ENCODE measurements at regions of chr9 and their contacts with region 1.

Region 1: GRCh38 chr9:131046581-131047202 is 37.7 kb downstream of the LAMC3 start:
- DNase-seq: peak; percentile 54 to 82 (median 69)
- ATAC-seq: peak; percentile 90
- H3K4me3 ChIP-seq: no peak overlapping the region
- H3K4me3 Mint-ChIP-seq: peak overlapping the region in 8 of 10 donors; percentile 31 to 70 (median 55)
- H3K27ac ChIP-seq: no peak overlapping the region
- H3K27ac Mint-ChIP-seq: peak overlapping the region in 3 of 9 donors; percentile 30 to 65 (median 38)
- H3K4me1 ChIP-seq: peaks cover 0 to 6% of the 10 kb centered on the region in 2 donors
- H3K4me1 Mint-ChIP-seq: peaks cover 0 to 18% (median 10%) of the 10 kb centered on the region in 7 donors
- H3K27me3 ChIP-seq: no peaks in the 10 kb centered on the region
- H3K27me3 Mint-ChIP-seq: peaks cover 0 to 2% (median 0%) of the 10 kb centered on the region in 5 donors

Region 2: DNA sequence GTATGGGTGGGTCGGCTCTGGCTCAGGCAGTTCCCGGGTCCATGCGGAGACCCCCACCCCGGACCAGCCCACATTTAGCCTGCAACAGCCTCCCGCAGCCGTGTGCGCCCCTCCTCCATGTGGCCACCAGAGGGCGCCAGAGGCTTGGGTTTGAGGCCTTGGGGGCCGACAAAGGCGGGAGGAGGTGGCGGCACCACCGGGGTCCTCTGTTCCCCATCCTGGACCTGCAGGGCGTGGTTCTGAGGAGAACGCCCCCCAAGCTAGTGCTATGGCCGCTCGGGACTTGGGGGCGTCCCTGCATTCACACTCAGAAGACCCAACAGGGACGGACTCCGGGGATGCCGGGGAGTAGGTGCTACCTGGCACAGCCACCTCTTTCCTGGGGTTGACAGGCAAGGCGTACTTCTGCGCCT is 585.5 kb before region 1 on chr9:
- CTCF ChIA-PET with region 1: interaction called, 4 read pairs
- POLR2A ChIA-PET with region 1: no interaction called
- intact Hi-C with region 1: loop called in 1 of 2 experiments (anchors 1 kb)
- DNase-seq: peak; percentile 25 to 79 (median 62)
- ATAC-seq: peak; percentile 75
- H3K4me3 ChIP-seq: no peak overlapping the region
- H3K4me3 Mint-ChIP-seq: no peak overlapping the region
- H3K27ac ChIP-seq: no peak overlapping the region
- H3K27ac Mint-ChIP-seq: no peak overlapping the region
- H3K4me1 ChIP-seq: no peaks in the 10 kb centered on the region
- H3K4me1 Mint-ChIP-seq: peaks cover 0 to 1% (median 0%) of the 10 kb centered on the region in 7 donors
- H3K27me3 ChIP-seq: peaks cover 0 to 4% of the 10 kb centered on the region in 2 donors
- H3K27me3 Mint-ChIP-seq: peaks cover 7 to 33% (median 14%) of the 10 kb centered on the region in 5 donors

Region 3: GRCh38 chr9:130590305-130590704 is 456.4 kb before region 1 on chr9:
- CTCF ChIA-PET with region 1: no interaction called
- POLR2A ChIA-PET with region 1: no interaction called
- intact Hi-C with region 1: no loop called
- DNase-seq: no peak
- ATAC-seq: no peak
- H3K4me3 ChIP-seq: no peak overlapping the region
- H3K4me3 Mint-ChIP-seq: no peak overlapping the region
- H3K27ac ChIP-seq: no peak overlapping the region
- H3K27ac Mint-ChIP-seq: no peak overlapping the region
- H3K4me1 ChIP-seq: no peaks in the 10 kb centered on the region
- H3K4me1 Mint-ChIP-seq: peaks cover 5 to 53% (median 40%) of the 10 kb centered on the region in 7 donors
- H3K27me3 ChIP-seq: no peaks in the 10 kb centered on the region
- H3K27me3 Mint-ChIP-seq: no peaks in the 10 kb centered on the region

Region 4: GRCh38 chr9:130607640-130608420 is 438.9 kb before region 1 on chr9:
- CTCF ChIA-PET with region 1: no interaction called
- POLR2A ChIA-PET with region 1: no interaction called
- intact Hi-C with region 1: no loop called
- DNase-seq: no peak
- ATAC-seq: no peak
- H3K4me3 ChIP-seq: no peak overlapping the region
- H3K4me3 Mint-ChIP-seq: no peak overlapping the region
- H3K27ac ChIP-seq: no peak overlapping the region
- H3K27ac Mint-ChIP-seq: peak overlapping the region in 1 of 9 donors; percentile 43
- H3K4me1 ChIP-seq: no peaks in the 10 kb centered on the region
- H3K4me1 Mint-ChIP-seq: peaks cover 0 to 7% (median 4%) of the 10 kb centered on the region in 7 donors
- H3K27me3 ChIP-seq: no peaks in the 10 kb centered on the region
- H3K27me3 Mint-ChIP-seq: no peaks in the 10 kb centered on the region

Region 5: DNA sequence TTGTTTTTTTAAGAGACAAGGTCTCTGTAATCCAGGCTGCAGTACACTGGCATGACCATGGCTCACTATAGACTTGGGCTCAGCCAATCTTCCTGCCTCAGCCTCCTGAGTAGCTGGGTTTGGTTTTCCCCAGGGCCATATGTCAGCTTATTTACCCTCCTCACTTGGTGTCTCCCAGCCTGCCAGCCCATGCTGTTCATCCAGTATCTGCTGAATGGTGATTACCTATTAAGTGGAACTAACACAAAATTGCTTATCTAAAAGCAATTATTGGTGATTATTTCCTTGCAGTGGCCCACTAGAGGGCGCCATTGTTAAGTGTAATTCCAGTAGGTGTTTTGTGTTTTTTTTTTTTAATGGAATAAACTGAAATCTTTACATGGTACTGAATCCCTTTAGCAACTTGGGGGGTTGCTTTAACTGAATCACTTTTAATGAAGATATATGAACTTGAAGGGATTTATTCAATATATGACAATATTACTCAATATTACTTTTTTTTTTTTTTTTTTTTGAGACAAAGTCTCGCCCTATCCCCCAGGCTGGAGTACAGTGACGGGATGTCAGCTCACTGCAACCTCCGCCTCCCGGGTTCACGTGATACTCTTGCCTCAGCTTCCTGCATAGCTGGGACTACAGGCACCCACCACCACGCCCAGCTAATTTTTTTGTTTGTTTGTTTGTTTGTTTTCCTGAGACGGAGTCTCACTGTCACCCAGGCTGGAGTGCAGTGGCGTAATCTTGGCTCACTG is 339.3 kb before region 1 on chr9:
- CTCF ChIA-PET with region 1: interaction called, 7 read pairs
- POLR2A ChIA-PET with region 1: no interaction called
- intact Hi-C with region 1: loop called in 1 of 2 experiments (anchors 5 kb)
- DNase-seq: peak; percentile 35 to 72 (median 64)
- ATAC-seq: peak; percentile 73
- H3K4me3 ChIP-seq: no peak overlapping the region
- H3K4me3 Mint-ChIP-seq: no peak overlapping the region
- H3K27ac ChIP-seq: no peak overlapping the region
- H3K27ac Mint-ChIP-seq: peak overlapping the region in 4 of 9 donors; percentile 52 to 81 (median 65)
- H3K4me1 ChIP-seq: peaks cover 0 to 4% of the 10 kb centered on the region in 2 donors
- H3K4me1 Mint-ChIP-seq: peaks cover under 1 to 9% (median 2%) of the 10 kb centered on the region in 7 donors
- H3K27me3 ChIP-seq: no peaks in the 10 kb centered on the region
- H3K27me3 Mint-ChIP-seq: no peaks in the 10 kb centered on the region

Region 6: DNA sequence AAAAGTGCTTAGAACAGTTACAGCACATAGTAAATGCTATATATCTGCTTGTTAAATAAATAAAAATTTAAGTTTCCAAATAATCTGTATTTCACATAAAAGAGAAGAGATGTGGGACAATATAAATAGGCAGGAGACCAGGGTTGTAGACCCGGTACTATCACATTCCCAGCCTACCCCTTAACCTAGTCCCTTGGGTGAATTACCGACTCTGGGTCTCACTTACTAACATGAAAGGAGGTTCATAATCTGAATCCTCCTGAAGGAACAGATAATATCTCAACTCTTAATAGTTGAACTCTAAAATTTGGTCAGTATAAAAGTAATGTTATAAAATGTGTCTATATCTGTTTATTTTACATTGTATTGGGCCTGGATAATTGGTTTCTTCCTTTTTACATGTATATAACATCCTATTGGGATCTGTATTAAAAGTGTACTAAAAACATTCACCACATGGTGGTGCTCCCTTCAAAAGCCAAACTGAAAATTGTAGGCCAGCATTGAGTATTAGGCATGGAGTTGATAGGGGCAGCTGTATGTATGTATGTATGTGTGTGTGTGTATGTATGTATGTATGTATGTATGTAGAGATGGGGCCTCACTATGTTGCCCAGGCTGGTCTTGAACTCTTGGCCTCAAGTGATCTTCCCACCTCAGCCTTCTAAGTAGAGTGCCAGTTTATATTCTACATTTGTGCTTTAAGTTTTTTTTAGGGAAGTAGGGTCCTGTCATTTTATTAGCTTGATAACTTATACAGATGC is 275.8 kb before region 1 on chr9:
- CTCF ChIA-PET with region 1: interaction called, 9 read pairs
- POLR2A ChIA-PET with region 1: no interaction called
- intact Hi-C with region 1: loop called in 1 of 2 experiments (anchors 1 kb)
- DNase-seq: peak in 7 of 9 donors; percentile 2 to 39 (median 22)
- ATAC-seq: peak; percentile 69
- H3K4me3 ChIP-seq: no peak overlapping the region
- H3K4me3 Mint-ChIP-seq: no peak overlapping the region
- H3K27ac ChIP-seq: no peak overlapping the region
- H3K27ac Mint-ChIP-seq: peak overlapping the region in 1 of 9 donors; percentile 3
- H3K4me1 ChIP-seq: peaks cover 0 to under 1% of the 10 kb centered on the region in 2 donors
- H3K4me1 Mint-ChIP-seq: peaks cover 12 to 53% (median 39%) of the 10 kb centered on the region in 7 donors
- H3K27me3 ChIP-seq: peaks cover 0 to 2% of the 10 kb centered on the region in 2 donors
- H3K27me3 Mint-ChIP-seq: no peaks in the 10 kb centered on the region

Region 7: GRCh38 chr9:130866474-130866965 is 180.2 kb before region 1 on chr9:
- CTCF ChIA-PET with region 1: interaction called, 16 read pairs
- POLR2A ChIA-PET with region 1: interaction called, 6 read pairs
- intact Hi-C with region 1: loop called (anchors 1 kb)
- DNase-seq: peak; percentile 8 to 54 (median 40)
- ATAC-seq: peak; percentile 56
- H3K4me3 ChIP-seq: no peak overlapping the region
- H3K4me3 Mint-ChIP-seq: no peak overlapping the region
- H3K27ac ChIP-seq: no peak overlapping the region
- H3K27ac Mint-ChIP-seq: no peak overlapping the region
- H3K4me1 ChIP-seq: no peaks in the 10 kb centered on the region
- H3K4me1 Mint-ChIP-seq: peaks cover 2 to 9% (median 5%) of the 10 kb centered on the region in 7 donors
- H3K27me3 ChIP-seq: no peaks in the 10 kb centered on the region
- H3K27me3 Mint-ChIP-seq: no peaks in the 10 kb centered on the region

Region 8: GRCh38 chr9:130940693-130941576 is 105.8 kb before region 1 on chr9:
- CTCF ChIA-PET with region 1: interaction called, 5 read pairs
- POLR2A ChIA-PET with region 1: no interaction called
- intact Hi-C with region 1: loop called in 1 of 2 experiments (anchors 5 kb)
- DNase-seq: peak; percentile 30 to 78 (median 56)
- ATAC-seq: peak; percentile 83
- H3K4me3 ChIP-seq: no peak overlapping the region
- H3K4me3 Mint-ChIP-seq: peak overlapping the region in 8 of 10 donors; percentile 10 to 62 (median 52)
- H3K27ac ChIP-seq: no peak overlapping the region
- H3K27ac Mint-ChIP-seq: peak overlapping the region in 1 of 9 donors; percentile 52
- H3K4me1 ChIP-seq: no peaks in the 10 kb centered on the region
- H3K4me1 Mint-ChIP-seq: peaks cover 0 to 15% (median 10%) of the 10 kb centered on the region in 7 donors
- H3K27me3 ChIP-seq: peaks cover 0 to 2% of the 10 kb centered on the region in 2 donors
- H3K27me3 Mint-ChIP-seq: peaks cover 34 to 71% (median 58%) of the 10 kb centered on the region in 5 donors

Region 9: GRCh38 chr9:130981756-130982137 is 64.9 kb before region 1 on chr9:
- CTCF ChIA-PET with region 1: no interaction called
- POLR2A ChIA-PET with region 1: no interaction called
- intact Hi-C with region 1: no loop called
- DNase-seq: no peak
- ATAC-seq: no peak
- H3K4me3 ChIP-seq: no peak overlapping the region
- H3K4me3 Mint-ChIP-seq: no peak overlapping the region
- H3K27ac ChIP-seq: no peak overlapping the region
- H3K27ac Mint-ChIP-seq: no peak overlapping the region
- H3K4me1 ChIP-seq: no peaks in the 10 kb centered on the region
- H3K4me1 Mint-ChIP-seq: peaks cover 0 to 3% (median 0%) of the 10 kb centered on the region in 7 donors
- H3K27me3 ChIP-seq: no peaks in the 10 kb centered on the region
- H3K27me3 Mint-ChIP-seq: peaks cover 0 to 9% (median 0%) of the 10 kb centered on the region in 5 donors

Region 10: DNA sequence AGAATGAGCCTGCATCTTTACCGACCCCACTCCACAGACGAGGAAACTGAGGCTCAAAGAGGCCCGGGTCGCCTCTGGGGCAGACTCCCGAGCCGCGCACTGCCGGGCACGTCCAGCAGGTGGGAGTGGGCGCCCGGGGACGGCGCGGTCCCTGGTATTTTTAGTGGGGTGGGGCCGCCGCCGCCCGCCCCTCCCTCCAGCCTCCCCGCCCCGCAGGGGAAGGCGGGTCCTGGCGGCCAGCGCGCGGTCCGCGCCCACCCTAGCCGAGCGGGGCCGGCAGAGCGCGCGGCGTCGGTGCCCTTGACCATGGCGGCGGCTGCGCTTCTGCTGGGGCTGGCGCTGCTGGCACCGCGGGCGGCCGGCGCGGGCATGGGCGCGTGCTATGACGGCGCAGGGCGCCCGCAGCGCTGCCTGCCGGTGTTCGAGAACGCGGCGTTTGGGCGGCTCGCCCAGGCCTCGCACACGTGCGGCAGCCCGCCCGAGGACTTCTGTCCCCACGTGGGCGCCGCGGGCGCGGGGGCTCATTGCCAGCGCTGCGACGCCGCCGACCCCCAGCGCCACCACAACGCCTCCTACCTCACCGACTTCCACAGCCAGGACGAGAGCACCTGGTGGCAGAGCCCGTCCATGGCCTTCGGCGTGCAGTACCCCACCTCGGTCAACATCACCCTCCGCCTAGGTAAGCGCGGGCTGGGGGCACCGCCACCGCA is 37.6 kb before region 1 on chr9 and contains the start of gene LAMC3:
- CTCF ChIA-PET with region 1: no interaction called
- POLR2A ChIA-PET with region 1: no interaction called
- intact Hi-C with region 1: loop called in 1 of 2 experiments (anchors 2 kb)
- DNase-seq: no peak
- ATAC-seq: peak; percentile 22
- H3K4me3 ChIP-seq: no peak within 1 kb of the TSS
- H3K4me3 Mint-ChIP-seq: peak within 1 kb of the TSS in 8 of 10 donors; percentile 29 to 71 (median 50)
- H3K27ac ChIP-seq: no peak within 1 kb of the TSS
- H3K27ac Mint-ChIP-seq: no peak within 1 kb of the TSS
- H3K4me1 ChIP-seq: no peaks in the 10 kb centered on the region
- H3K4me1 Mint-ChIP-seq: peaks cover 0 to 5% (median 4%) of the 10 kb centered on the region in 7 donors
- H3K27me3 ChIP-seq: peaks cover 0 to 4% of the 10 kb centered on the region in 2 donors
- H3K27me3 Mint-ChIP-seq: peaks cover 18 to 46% (median 39%) of the 10 kb centered on the region in 5 donors
- total RNA-seq, gene LAMC3: 0.07 to 9.2 (median 3.5) TPM

Measured in naive thymus-derived CD4-positive, alpha-beta T cell (primary cell).